HepG2 (cell line): ENCODE measurements at regions of chr11 and their contacts with region 1.

Region 1: DNA sequence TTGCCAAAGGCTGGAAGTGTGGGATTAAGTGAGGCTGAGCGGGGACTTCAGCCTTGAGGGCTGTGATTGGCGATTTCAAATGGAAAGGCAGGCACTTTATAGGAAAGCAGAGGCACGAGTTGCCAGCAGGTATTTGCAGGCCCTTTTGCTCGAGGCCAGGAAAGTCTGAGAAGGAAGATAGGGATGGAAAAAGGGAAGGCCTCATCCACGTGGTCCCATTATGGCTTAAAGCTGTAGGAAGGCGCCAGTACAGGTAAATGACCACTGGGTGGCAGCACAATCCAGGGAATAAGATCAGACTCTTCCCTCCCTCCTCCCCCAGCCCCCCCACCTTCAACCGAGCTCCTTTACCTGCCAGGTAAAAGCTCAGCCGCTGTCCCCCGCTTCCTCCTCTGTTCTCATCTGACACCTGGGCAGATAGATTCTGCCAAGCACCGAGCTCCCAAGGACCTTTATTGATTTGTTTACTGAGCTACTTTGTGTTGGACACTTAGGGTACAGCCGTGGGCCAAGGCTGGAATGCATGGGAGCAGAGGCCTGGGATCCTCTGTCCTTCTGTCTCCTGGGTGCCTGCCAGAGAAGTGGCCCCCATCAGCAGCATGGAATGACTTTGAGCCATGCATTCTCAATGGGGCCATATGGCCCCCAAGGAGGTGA is 7.5 kb downstream of the P2RX3 start:
- DNase-seq: peak; percentile 64
- ATAC-seq: peak; percentile 55
- H3K4me3 ChIP-seq: peak overlapping the region in 1 of 3 experiments; percentile 20; a peak in 1 of 6 replicates
- H3K27ac ChIP-seq: no peak overlapping the region
- H3K4me1 ChIP-seq: peaks cover 65% of the 10 kb centered on the region
- H3K27me3 ChIP-seq: peaks cover 1 to 27% of the 10 kb centered on the region in 2 experiments; a peak in 4 of 5 replicates
- CTCF ChIP-seq: peak; percentile 83
- EP300 ChIP-seq: no peak
- POLR2A ChIP-seq: no peak
- RAD21 ChIP-seq: peak; percentile 47; the same call in 1 of the 2 replicates

Region 2: GRCh38 chr11:57131080-57131790 is 214.4 kb before region 1 on chr11:
- CTCF ChIA-PET with region 1: no interaction called
- POLR2A ChIA-PET with region 1: no interaction called
- in situ Hi-C with region 1: no loop called
- intact Hi-C with region 1: loop called (anchors 10 kb)
- DNase-seq: peak; percentile 5
- ATAC-seq: peak; percentile 96
- H3K4me3 ChIP-seq: no peak overlapping the region
- H3K27ac ChIP-seq: no peak overlapping the region
- H3K4me1 ChIP-seq: no peaks in the 10 kb centered on the region
- H3K27me3 ChIP-seq: no peaks in the 10 kb centered on the region; a peak in 1 of 5 replicates
- CTCF ChIP-seq: peak; percentile 80
- EP300 ChIP-seq: no peak
- POLR2A ChIP-seq: no peak
- RAD21 ChIP-seq: no peak; the same call in 1 of the 2 replicates

Region 3: GRCh38 chr11:57456960-57457642 is 111.4 kb after region 1 on chr11:
- CTCF ChIA-PET with region 1: no interaction called
- POLR2A ChIA-PET with region 1: no interaction called
- in situ Hi-C with region 1: loop called (anchors 5 kb)
- intact Hi-C with region 1: loop called (anchors 1 kb)
- DNase-seq: peak; percentile 82
- ATAC-seq: peak; percentile 62
- H3K4me3 ChIP-seq: peak overlapping the region; percentile 57 to 75 (median 66); a peak in 3 of 6 replicates
- H3K27ac ChIP-seq: peak overlapping the region; percentile 49
- H3K4me1 ChIP-seq: peaks cover 72% of the 10 kb centered on the region
- H3K27me3 ChIP-seq: peaks cover 3 to 14% of the 10 kb centered on the region in 2 experiments; a peak in 4 of 5 replicates
- CTCF ChIP-seq: peak; percentile 97
- EP300 ChIP-seq: no peak
- POLR2A ChIP-seq: no peak
- RAD21 ChIP-seq: peak; percentile 94

Region 4: GRCh38 chr11:57530596-57531507 is 185.2 kb after region 1 on chr11 and contains the start of gene TIMM10:
- CTCF ChIA-PET with region 1: interaction called, 7 read pairs
- POLR2A ChIA-PET with region 1: no interaction called
- in situ Hi-C with region 1: loop called (anchors 5 kb)
- intact Hi-C with region 1: loop called (anchors 1 kb)
- DNase-seq: peak; percentile 99
- ATAC-seq: peak; percentile 98
- H3K4me3 ChIP-seq: peak within 1 kb of the TSS; percentile 80 to 98 (median 96)
- H3K27ac ChIP-seq: peak within 1 kb of the TSS; percentile 64
- H3K4me1 ChIP-seq: peaks cover 42% of the 10 kb centered on the region
- H3K27me3 ChIP-seq: peaks cover 0 to 5% of the 10 kb centered on the region in 2 experiments; a peak in 1 of 5 replicates
- CTCF ChIP-seq: no peak; the same call in 1 of the 2 replicates
- EP300 ChIP-seq: peak in 1 of 2 experiments; percentile 21; a peak in 2 of 4 replicates
- POLR2A ChIP-seq: peak; percentile 64 to 70
- RAD21 ChIP-seq: no peak
- total RNA-seq, gene TIMM10: 82.2 and 103 TPM in 2 replicates

Region 5: GRCh38 chr11:57644748-57645688 is 299.3 kb after region 1 on chr11:
- CTCF ChIA-PET with region 1: interaction called, 6 read pairs
- POLR2A ChIA-PET with region 1: interaction called, 3 read pairs
- in situ Hi-C with region 1: loop called (anchors 5 kb)
- intact Hi-C with region 1: loop called (anchors 1 kb)
- DNase-seq: peak; percentile 69
- ATAC-seq: peak; percentile 81
- H3K4me3 ChIP-seq: no peak overlapping the region
- H3K27ac ChIP-seq: no peak overlapping the region
- H3K4me1 ChIP-seq: peaks cover 37% of the 10 kb centered on the region
- H3K27me3 ChIP-seq: peaks cover 6 to 42% of the 10 kb centered on the region in 2 experiments
- CTCF ChIP-seq: peak; percentile 86
- EP300 ChIP-seq: no peak
- POLR2A ChIP-seq: no peak
- RAD21 ChIP-seq: peak; percentile 52